Activated T-helper 1 cell treated with anti-CD3 and anti-CD28 coated beads, Interleukin-12 subunit alpha, Interleukin-12 subunit beta, Interleukin-2, Interleukin-4 antibody, amounts not matched to agents 30 ng/mL and 10 ng/mL and 1 ng/mL, durations not matched to agents 14 hours and 24 hours and 36 hours (primary cell): ENCODE measurements at regions of chr14 and their contacts with region 1.

Region 1: DNA sequence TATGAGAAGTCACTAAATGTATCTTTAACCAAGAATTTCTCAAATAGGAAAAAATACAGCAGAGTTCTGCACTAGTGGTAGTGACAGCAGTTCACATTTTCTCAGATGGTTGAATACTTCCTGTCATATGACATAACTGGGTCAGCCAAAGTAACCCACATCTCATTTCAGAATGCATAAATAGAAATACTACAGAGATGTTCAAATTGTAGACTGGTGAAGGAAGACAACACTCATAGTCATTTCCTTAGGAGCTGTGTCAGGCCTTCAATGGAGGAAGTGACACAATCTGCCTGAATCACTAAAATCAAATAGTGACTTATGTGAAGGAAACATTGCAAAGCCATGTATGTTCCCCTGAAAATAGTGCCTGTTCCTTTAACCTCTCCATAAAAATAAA is 32.4 kb downstream of the FERMT2 start:
- DNase-seq: peak; percentile 33
- H3K4me3 Mint-ChIP-seq: no peak overlapping the region
- H3K27ac Mint-ChIP-seq: peak overlapping the region; percentile 50
- H3K4me1 Mint-ChIP-seq: peaks cover 36% of the 10 kb centered on the region
- H3K27me3 Mint-ChIP-seq: no peaks in the 10 kb centered on the region

Region 2: GRCh38 chr14:52950898-52951689 is 32.6 kb after region 1 on chr14 and contains the start of gene FERMT2:
- intact Hi-C with region 1: loop called (anchors 1 kb)
- DNase-seq: no peak
- H3K4me3 Mint-ChIP-seq: peak within 1 kb of the TSS; percentile 83
- H3K27ac Mint-ChIP-seq: peak within 1 kb of the TSS; percentile 19
- H3K4me1 Mint-ChIP-seq: peaks cover 14% of the 10 kb centered on the region
- H3K27me3 Mint-ChIP-seq: peaks cover 57% of the 10 kb centered on the region
- total RNA-seq, gene FERMT2: 1.3 and 2.1 TPM in 2 replicates